Activated B cell treated with CpG ODN at 0.5 μM for 24 hours (primary cell): ENCODE measurements at regions of chr21 and their contacts with region 1.

Region 1: GRCh38 chr21:28949318-28949717 is 43.4 kb downstream of the LTN1 start:
- DNase-seq: no peak
- ATAC-seq: no peak
- H3K4me3 Mint-ChIP-seq: no peak overlapping the region
- H3K27ac Mint-ChIP-seq: no peak overlapping the region
- H3K4me1 Mint-ChIP-seq: peaks cover 2% of the 10 kb centered on the region
- H3K27me3 Mint-ChIP-seq: no peaks in the 10 kb centered on the region
- CTCF ChIP-seq: no peak

Region 2: GRCh38 chr21:28704746-28705145 is 244.6 kb before region 1 on chr21:
- CTCF ChIA-PET with region 1: no interaction called
- POLR2A ChIA-PET with region 1: no interaction called
- intact Hi-C with region 1: no loop called
- DNase-seq: no peak
- ATAC-seq: no peak
- H3K4me3 Mint-ChIP-seq: no peak overlapping the region
- H3K27ac Mint-ChIP-seq: no peak overlapping the region
- H3K4me1 Mint-ChIP-seq: no peaks in the 10 kb centered on the region
- H3K27me3 Mint-ChIP-seq: no peaks in the 10 kb centered on the region
- CTCF ChIP-seq: no peak

Region 3: DNA sequence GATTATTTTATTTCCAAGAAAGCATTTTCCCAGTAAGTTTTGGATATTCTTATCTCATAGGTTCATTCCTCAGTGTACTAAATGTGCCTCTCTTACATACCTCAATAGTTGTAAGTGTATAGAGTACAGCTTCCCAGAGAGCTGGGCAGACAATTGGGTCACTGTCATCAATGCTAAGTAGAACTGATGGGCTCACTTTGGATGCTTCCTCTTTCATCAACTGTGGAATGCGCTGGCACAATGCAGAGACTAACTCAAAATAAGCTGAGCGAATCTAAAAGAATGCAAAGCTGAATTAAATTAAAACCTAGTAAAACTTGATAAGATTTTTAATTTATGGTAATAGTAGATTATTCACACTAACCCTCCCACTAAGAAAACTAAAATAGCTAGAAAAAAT is 21.9 kb after region 1 on chr21:
- CTCF ChIA-PET with region 1: no interaction called
- POLR2A ChIA-PET with region 1: no interaction called
- intact Hi-C with region 1: loop called (anchors 2 kb)
- DNase-seq: no peak
- ATAC-seq: no peak
- H3K4me3 Mint-ChIP-seq: no peak overlapping the region
- H3K27ac Mint-ChIP-seq: no peak overlapping the region
- H3K4me1 Mint-ChIP-seq: no peaks in the 10 kb centered on the region
- H3K27me3 Mint-ChIP-seq: no peaks in the 10 kb centered on the region
- CTCF ChIP-seq: no peak

Region 4: GRCh38 chr21:28986677-28987076 is 37.4 kb after region 1 on chr21:
- CTCF ChIA-PET with region 1: no interaction called
- POLR2A ChIA-PET with region 1: no interaction called
- intact Hi-C with region 1: no loop called
- DNase-seq: no peak
- ATAC-seq: no peak
- H3K4me3 Mint-ChIP-seq: no peak overlapping the region
- H3K27ac Mint-ChIP-seq: no peak overlapping the region
- H3K4me1 Mint-ChIP-seq: peaks cover 23% of the 10 kb centered on the region
- H3K27me3 Mint-ChIP-seq: no peaks in the 10 kb centered on the region
- CTCF ChIP-seq: no peak

Region 5: GRCh38 chr21:29018540-29018939 is 69.2 kb after region 1 on chr21:
- CTCF ChIA-PET with region 1: no interaction called
- POLR2A ChIA-PET with region 1: no interaction called
- intact Hi-C with region 1: no loop called
- DNase-seq: no peak
- ATAC-seq: peak; percentile 17
- H3K4me3 Mint-ChIP-seq: peak overlapping the region; percentile 92
- H3K27ac Mint-ChIP-seq: peak overlapping the region; percentile 94
- H3K4me1 Mint-ChIP-seq: peaks cover 29% of the 10 kb centered on the region
- H3K27me3 Mint-ChIP-seq: no peaks in the 10 kb centered on the region
- CTCF ChIP-seq: no peak